Esophagus muscularis mucosa (tissue), 4 donors: ENCODE measurements at regions of chr13 and their contacts with region 1.

Region 1: DNA sequence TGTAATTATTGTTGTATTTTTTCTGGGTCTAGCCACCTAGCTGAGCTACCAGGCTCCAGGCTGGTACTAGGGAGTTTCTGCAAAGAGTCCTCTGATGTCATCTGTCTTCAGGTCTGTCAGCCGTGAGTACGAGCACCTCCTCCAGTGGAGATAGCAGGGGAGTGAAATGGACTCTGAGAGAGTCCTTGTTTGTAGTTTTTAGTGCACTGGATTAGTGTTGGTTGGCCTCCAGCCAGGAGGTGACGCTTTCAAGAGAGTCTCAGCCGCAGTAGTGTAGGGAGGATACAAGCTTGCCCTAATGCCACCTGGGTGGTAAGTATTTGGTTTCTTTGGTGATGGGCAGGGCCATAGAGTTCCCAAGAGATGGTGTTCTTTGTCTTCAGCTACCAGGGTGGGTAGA is 384.8 kb downstream of the SLC7A1 start:
- DNase-seq: no peak
- H3K4me3 ChIP-seq: no peak overlapping the region
- H3K27ac ChIP-seq: no peak overlapping the region
- H3K4me1 ChIP-seq: no peaks in the 10 kb centered on the region
- H3K27me3 ChIP-seq: no peaks in the 10 kb centered on the region
- CTCF ChIP-seq: no peak
- EP300 ChIP-seq: no peak
- POLR2A ChIP-seq: no peak

Region 2: GRCh38 chr13:28754698-28755545 is 455.8 kb before region 1 on chr13:
- intact Hi-C with region 1: no loop called
- DNase-seq: peak; percentile 55
- H3K4me3 ChIP-seq: peak overlapping the region; percentile 5 to 30 (median 24)
- H3K27ac ChIP-seq: peak overlapping the region; percentile 29 to 70 (median 43)
- H3K4me1 ChIP-seq: peaks cover 13 to 15% (median 15%) of the 10 kb centered on the region in 4 donors
- H3K27me3 ChIP-seq: no peaks in the 10 kb centered on the region
- CTCF ChIP-seq: peak in 1 of 3 experiments; percentile 29
- EP300 ChIP-seq: no peak
- POLR2A ChIP-seq: no peak

Region 3: DNA sequence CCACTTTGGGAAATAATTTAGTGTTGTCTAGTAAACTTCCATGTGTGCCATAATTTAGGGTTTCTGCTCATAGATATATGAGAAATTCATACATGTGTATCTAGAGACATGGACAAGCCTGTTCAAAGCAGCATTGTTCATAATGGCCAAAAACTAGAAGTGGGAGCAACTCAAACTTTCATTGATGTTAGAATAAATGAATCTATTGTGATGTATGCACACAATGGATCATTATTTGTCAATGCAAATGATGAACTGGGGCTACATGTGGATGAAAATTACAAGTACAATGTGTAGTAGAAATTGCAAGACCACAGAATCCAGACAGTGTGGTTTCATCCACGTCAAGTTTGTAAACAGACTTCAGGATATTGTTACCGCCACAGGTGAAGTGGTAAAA is 100.1 kb after region 1 on chr13:
- intact Hi-C with region 1: no loop called
- DNase-seq: no peak
- H3K4me3 ChIP-seq: no peak overlapping the region
- H3K27ac ChIP-seq: no peak overlapping the region
- H3K4me1 ChIP-seq: no peaks in the 10 kb centered on the region
- H3K27me3 ChIP-seq: no peaks in the 10 kb centered on the region
- CTCF ChIP-seq: no peak
- EP300 ChIP-seq: no peak
- POLR2A ChIP-seq: no peak

Region 4: GRCh38 chr13:29354377-29354776 is 143.7 kb after region 1 on chr13:
- intact Hi-C with region 1: loop called (anchors 5 kb)
- DNase-seq: no peak
- H3K4me3 ChIP-seq: no peak overlapping the region
- H3K27ac ChIP-seq: no peak overlapping the region
- H3K4me1 ChIP-seq: no peaks in the 10 kb centered on the region
- H3K27me3 ChIP-seq: no peaks in the 10 kb centered on the region
- CTCF ChIP-seq: no peak
- EP300 ChIP-seq: no peak
- POLR2A ChIP-seq: no peak